T-cell (primary cell): ENCODE measurements at regions of chr15 and their contacts with region 1.

Region 1: DNA sequence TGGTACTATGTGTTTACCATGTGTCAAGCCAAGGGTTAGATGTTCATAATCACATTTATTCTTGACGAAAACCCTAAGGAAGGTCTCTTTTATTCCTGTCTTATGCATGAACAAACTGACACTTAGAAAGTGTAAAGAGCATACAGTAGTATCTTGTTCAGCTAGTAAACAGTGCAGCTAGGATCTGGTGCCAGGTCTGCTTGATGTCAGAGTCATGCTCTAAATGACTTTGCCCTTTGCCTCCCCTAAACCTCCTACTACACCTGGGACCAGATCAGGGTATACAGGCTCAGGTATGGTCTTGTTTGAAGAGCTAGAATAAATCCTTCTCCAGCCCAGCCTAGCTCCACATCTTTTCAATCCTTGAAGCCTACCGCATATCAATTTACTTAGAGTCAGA is 232.4 kb downstream of the ADAMTSL3 start:
- DNase-seq: no peak
- ATAC-seq: no peak
- H3K4me3 ChIP-seq: no peak overlapping the region
- H3K4me3 Mint-ChIP-seq: no peak overlapping the region
- H3K27ac ChIP-seq: no peak overlapping the region
- H3K27ac Mint-ChIP-seq: no peak overlapping the region
- H3K4me1 ChIP-seq: no peaks in the 10 kb centered on the region
- H3K4me1 Mint-ChIP-seq: no peaks in the 10 kb centered on the region
- H3K27me3 ChIP-seq: no peaks in the 10 kb centered on the region
- H3K27me3 Mint-ChIP-seq: peaks cover 6 to 8% of the 10 kb centered on the region in 2 donors

Region 2: DNA sequence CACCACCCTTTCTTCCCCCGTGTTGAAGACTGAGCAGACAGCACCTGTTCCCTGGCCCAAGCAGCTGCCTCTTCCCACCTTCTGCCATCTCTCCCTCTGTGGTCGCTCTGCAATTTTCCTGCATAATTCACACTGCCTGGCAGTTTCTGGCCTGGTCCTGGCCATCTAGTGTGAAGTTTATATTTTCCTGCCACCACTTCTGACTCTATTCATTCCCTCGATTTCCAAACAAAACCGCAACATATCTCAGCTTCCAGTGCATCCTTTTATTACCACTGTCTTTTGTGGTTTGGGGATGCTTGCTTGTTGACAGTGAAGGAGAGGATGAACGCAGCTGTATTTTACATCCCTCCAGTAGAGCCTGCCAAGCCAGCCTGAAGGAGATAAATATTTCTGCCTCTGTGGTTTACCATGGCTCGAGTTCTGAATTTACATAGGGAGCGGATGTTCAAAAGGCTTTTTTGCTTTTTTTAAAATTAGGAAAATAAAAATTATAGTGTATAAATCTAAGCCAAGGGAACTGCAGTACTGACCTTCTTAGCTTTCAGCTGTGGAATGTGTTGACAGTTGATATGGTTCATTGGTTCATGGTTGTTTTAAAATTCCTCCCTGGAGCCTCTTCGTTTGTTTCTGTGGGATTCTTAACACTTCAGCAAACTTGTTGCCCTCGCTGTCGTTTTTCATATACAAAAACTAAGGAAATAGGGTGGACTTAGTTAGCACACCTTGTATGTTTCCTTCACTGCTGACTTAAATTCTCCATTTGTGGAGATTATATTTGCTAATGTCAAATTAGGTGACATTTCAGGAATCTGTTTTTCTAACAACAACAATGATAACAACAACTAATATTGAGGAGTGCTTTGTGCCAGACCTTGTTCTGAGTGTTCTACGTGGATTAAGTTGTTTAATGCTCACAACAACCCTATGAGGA is 18.1 kb after region 1 on chr15:
- CTCF ChIA-PET with region 1: no interaction called
- POLR2A ChIA-PET with region 1: interaction called in 1 of 2 experiments, 13 read pairs
- DNase-seq: no peak
- ATAC-seq: no peak
- H3K4me3 ChIP-seq: no peak overlapping the region
- H3K4me3 Mint-ChIP-seq: no peak overlapping the region
- H3K27ac ChIP-seq: no peak overlapping the region
- H3K27ac Mint-ChIP-seq: no peak overlapping the region
- H3K4me1 ChIP-seq: no peaks in the 10 kb centered on the region
- H3K4me1 Mint-ChIP-seq: no peaks in the 10 kb centered on the region
- H3K27me3 ChIP-seq: peaks cover 0 to 2% of the 10 kb centered on the region in 2 experiments
- H3K27me3 Mint-ChIP-seq: peaks cover 0 to 4% of the 10 kb centered on the region in 2 donors

Region 3: DNA sequence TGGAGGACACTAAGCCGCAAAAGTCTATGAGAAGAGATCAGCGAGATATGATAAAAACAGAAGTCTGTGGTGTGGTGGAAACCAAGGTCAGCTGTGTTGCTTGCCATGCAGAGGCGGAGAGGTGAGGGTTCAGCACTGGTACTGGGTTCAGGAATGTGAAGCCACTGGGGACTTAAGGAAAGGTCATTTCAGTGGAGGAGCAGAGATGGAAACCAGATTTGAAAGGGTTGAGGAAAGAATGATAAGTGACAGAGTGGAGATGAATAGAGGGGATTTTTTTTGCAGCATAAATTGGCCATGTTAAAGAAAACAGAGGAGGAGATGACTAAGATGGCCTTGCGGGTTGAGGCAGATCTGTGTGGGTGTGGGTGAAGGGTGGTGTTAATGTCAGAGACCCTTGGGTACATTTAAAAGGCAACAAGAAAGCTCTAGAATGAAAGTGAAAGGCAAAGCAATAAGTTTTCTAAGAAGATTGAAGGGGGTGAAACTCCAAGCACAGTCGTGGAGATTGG is 33.1 kb after region 1 on chr15:
- CTCF ChIA-PET with region 1: no interaction called
- POLR2A ChIA-PET with region 1: no interaction called
- DNase-seq: no peak
- ATAC-seq: no peak
- H3K4me3 ChIP-seq: no peak overlapping the region
- H3K4me3 Mint-ChIP-seq: no peak overlapping the region
- H3K27ac ChIP-seq: no peak overlapping the region
- H3K27ac Mint-ChIP-seq: no peak overlapping the region
- H3K4me1 ChIP-seq: no peaks in the 10 kb centered on the region
- H3K4me1 Mint-ChIP-seq: peaks cover 0 to 10% (median 0%) of the 10 kb centered on the region in 3 donors
- H3K27me3 ChIP-seq: no peaks in the 10 kb centered on the region
- H3K27me3 Mint-ChIP-seq: peaks cover 0 to 10% of the 10 kb centered on the region in 2 donors